Activated naive CD8-positive, alpha-beta T cell treated with anti-CD3 and anti-CD28 coated beads, Interleukin-2, amount 10 ng/mL, durations not matched to agents 7 days and 5 days (primary cell): ENCODE measurements at regions of chr4 and their contacts with region 1.

Region 1: GRCh38 chr4:2963175-2963965 is at the starts of genes GRK4 and NOP14:
- DNase-seq: peak; percentile 96
- ATAC-seq: peak; percentile 86
- H3K4me3 Mint-ChIP-seq: peak within 1 kb of the TSS; percentile 87
- H3K27ac Mint-ChIP-seq: peak within 1 kb of the TSS; percentile 79
- H3K4me1 Mint-ChIP-seq: peaks cover 31% of the 10 kb centered on the region
- H3K27me3 Mint-ChIP-seq: peaks cover 3% of the 10 kb centered on the region
- total RNA-seq, gene GRK4: 2.4 to 3.4 TPM
- total RNA-seq, gene NOP14: 36.8 to 40.3 TPM

Region 2: DNA sequence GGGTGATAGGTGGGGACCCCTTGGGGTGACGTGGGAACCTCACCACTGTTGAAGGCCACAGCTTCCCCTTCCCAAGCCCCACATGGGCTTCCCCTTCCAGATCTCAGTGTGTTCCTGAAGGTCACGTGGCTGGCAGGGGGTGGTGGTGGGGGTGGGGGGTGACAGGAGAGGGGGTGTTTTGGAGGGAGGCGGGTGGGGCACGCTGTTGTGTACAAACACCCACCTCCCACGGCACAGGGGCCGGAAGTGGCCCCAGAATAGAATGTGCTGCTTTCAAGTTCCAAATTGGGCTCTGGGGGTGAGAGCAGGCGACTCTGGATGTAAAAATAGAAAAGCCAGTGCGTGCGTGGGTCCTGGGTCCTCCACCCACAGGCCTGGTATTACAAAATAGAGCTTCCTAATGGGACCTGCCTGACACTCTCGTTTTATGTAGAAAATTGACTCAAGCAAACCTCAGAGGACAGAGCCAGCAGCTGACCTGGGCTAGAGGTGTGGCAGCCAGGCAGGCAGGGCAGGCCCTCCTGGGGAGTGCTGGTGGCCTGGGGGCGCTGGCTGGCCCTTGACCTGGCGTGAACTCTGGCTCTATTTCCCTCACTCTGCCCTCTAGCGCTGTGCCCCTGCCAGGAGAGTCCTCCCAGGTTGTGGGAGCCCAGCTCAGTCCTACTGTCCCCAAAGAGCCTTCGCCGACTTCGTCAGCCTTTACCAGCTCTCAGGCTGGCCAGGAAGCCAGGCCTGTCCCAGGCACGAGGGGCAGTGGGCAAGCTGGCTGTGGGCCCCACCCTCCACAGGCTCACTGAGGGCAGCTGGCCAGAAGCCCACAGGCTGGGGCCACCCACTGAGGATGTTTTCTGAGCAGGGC is 175.9 kb before region 1 on chr4:
- POLR2A ChIA-PET with region 1: no interaction called
- DNase-seq: peak; percentile 51
- ATAC-seq: peak; percentile 65
- H3K4me3 Mint-ChIP-seq: peak overlapping the region; percentile 47
- H3K27ac Mint-ChIP-seq: peak overlapping the region; percentile 90
- H3K4me1 Mint-ChIP-seq: peaks cover 22% of the 10 kb centered on the region
- H3K27me3 Mint-ChIP-seq: peaks cover 7% of the 10 kb centered on the region

Region 3: DNA sequence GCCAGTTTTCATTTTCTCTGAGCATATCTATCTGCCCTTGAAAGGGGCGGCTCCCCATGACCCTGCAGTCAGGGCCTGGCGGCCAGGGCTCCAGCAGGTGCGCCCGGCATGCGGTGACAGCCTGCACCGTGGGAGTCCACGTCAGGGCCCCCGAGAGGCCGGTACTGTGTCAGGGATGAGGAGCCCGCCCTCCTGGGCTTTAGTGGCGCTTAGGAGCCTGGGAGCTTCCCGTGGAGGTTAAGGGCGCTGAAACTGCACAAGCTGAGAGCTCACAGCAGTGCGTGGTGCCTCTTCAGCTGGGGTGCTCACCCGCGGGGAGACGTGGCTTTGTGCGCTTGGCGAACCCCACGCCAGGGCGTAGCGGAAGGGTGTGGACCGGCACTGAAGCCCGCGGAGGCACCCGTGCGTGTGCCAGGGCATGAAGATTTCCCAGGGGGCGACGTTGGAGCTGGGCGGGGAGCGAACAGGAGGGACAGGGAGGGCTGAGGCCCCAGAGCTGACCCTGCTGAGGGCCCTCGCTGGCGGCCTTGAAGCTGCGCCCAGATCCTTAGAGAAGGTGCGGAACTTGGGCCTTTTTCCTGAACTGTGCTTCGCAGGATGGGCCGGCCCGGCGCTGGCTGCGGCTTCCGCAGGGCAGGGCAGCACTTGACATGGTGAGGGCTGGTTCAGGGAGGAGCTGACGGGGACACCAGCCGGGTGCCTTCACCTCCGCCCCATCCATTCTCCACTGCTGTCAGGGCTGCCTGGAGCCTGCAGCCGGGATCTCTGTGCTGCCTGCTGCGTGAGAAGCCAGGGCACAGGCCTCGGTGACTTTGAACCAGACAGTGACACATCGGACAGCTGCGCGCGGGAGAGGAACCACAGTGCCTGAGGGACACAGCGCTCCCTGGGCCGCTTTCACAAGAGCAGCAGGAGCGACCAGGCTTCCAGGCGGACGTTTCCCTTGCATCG is 78.1 kb after region 1 on chr4:
- POLR2A ChIA-PET with region 1: interaction called, 10 read pairs
- DNase-seq: peak; percentile 71
- ATAC-seq: peak; percentile 61
- H3K4me3 Mint-ChIP-seq: peak overlapping the region; percentile 91
- H3K27ac Mint-ChIP-seq: peak overlapping the region; percentile 94
- H3K4me1 Mint-ChIP-seq: peaks cover 63% of the 10 kb centered on the region
- H3K27me3 Mint-ChIP-seq: peaks cover 5% of the 10 kb centered on the region